ENCODE measurements at regions of chr7 and their contacts with region 1.

Region 1: GRCh38 chr7:136868496-136869000 is at the start of gene CHRM2:
- DNase-seq: peak; percentile 64
- H3K4me3 ChIP-seq: peak within 1 kb of the TSS; percentile 77 to 86 (median 82)
- H3K27ac ChIP-seq: peak within 1 kb of the TSS; percentile 46 to 91 (median 90)
- H3K4me1 ChIP-seq: peaks cover 0 to 38% (median 23%) of the 10 kb centered on the region in 4 donors
- H3K27me3 ChIP-seq: no peaks in the 10 kb centered on the region
- CTCF ChIP-seq: no peak
- EP300 ChIP-seq: no peak
- POLR2A ChIP-seq: no peak
- total RNA-seq, gene CHRM2: 94.8 to 121 (median 100) TPM

Region 2: GRCh38 chr7:136293272-136293671 is 575.3 kb before region 1 on chr7:
- intact Hi-C with region 1: loop called (anchors 10 kb)
- DNase-seq: no peak
- H3K4me3 ChIP-seq: no peak overlapping the region
- H3K27ac ChIP-seq: peak overlapping the region in 3 of 4 donors; percentile 51 to 68 (median 67)
- H3K4me1 ChIP-seq: peaks cover 0 to 31% (median 17%) of the 10 kb centered on the region in 4 donors
- H3K27me3 ChIP-seq: no peaks in the 10 kb centered on the region
- CTCF ChIP-seq: no peak
- EP300 ChIP-seq: no peak
- POLR2A ChIP-seq: no peak

Region 3: DNA sequence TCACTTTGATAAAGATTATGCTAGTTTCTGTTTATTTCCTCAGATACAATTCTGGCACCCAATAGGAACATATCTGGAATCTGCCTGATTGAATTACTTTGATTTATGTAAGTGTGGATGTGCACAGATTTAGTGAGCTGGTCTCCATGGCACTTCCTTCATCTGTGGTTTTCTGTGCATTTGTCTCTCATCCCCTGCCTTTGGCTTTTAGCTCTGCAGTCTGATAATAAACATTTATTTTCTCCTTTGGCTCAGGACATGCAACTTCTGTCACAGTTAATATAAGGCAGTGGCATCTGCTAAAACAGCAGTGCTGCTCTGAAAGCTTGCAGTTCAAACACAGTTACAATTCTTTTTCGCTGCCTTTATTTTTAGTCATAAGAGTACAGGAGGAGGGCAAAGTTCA is 273.8 kb before region 1 on chr7:
- intact Hi-C with region 1: loop called (anchors 10 kb)
- DNase-seq: no peak
- H3K4me3 ChIP-seq: no peak overlapping the region
- H3K27ac ChIP-seq: peak overlapping the region in 3 of 4 donors; percentile 60 to 76 (median 73)
- H3K4me1 ChIP-seq: peaks cover 0 to 48% (median 10%) of the 10 kb centered on the region in 4 donors
- H3K27me3 ChIP-seq: no peaks in the 10 kb centered on the region
- CTCF ChIP-seq: peak in 2 of 4 experiments; percentile 9 to 18
- EP300 ChIP-seq: peak in 3 of 4 donors; percentile 58 to 72 (median 61)
- POLR2A ChIP-seq: no peak

Region 4: DNA sequence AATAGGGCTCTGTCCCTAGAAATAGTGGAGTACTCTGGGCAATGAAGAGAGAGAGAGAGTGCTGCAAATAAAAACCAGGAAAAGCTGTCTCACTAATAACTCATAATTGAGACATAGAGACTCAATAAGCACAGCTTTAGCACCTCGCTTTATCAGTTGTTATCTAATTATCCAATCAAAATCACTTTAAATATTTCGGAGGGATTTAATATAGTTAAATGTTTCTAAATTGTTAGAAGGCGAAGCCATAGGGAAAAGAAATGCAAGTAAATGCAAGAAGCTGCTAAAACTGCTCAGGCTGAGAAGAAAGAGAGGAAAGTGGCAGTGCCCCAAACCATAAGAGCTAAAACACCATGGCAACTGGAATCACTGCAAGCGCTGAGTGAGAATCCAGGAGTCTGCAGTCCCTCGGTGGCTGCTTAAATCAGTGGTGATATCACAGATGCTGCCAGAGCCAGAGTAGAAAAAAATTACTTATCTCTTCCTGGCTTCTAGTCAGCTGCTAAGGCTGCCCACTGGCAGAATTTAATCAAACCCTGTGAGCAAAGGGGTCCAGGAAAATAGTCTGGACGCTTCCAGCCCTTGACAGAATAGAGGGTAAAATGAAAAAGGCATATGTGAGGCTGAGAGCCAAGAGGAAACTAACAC is 150.5 kb before region 1 on chr7:
- intact Hi-C with region 1: no loop called
- DNase-seq: no peak
- H3K4me3 ChIP-seq: no peak overlapping the region
- H3K27ac ChIP-seq: no peak overlapping the region
- H3K4me1 ChIP-seq: no peaks in the 10 kb centered on the region
- H3K27me3 ChIP-seq: no peaks in the 10 kb centered on the region
- CTCF ChIP-seq: no peak
- EP300 ChIP-seq: no peak
- POLR2A ChIP-seq: no peak

Measured in sigmoid colon (tissue), 7 donors.